ENCODE measurements at regions of chr1 and their contacts with region 1.

Region 1: DNA sequence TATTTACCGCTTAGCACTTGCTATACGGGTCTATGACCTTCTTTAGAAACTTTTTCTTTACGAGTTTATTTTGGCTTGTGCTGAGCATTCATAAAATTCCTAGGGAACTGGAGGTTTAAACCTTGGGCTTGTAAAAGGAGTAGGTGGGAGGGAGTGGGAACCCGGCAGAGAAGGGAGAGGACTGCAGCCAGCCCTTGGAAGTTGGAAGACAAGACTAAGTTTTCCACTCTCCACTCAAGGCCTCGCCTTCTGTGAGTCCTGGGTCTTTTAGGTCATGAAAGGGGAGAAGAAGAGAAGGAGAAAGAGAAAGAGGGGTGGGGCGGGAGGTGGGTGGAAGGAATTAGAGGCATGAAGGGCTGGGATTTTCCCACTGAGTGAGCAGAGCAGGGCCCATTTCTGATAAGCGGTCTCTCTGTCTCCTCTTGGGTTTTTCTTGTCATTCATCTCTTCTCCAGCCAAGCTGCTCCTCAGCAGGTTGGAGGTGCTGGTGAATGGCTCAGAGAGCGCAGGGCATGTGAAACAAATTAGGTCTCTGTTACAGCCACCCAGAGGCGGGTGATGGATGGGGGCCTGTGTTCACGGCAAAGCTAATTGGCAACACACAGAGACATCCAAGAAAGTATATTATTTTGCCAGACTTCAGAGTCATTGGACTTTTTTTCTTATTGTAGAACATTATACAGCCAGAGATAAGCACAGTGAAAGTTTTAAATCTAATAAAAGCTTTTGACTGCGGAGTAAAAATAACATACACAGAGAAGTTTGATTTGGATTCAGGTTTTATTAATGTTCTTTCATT is 247.3 kb downstream of the FOXD2 start:
- DNase-seq: peak; percentile 74
- H3K4me3 ChIP-seq: no peak overlapping the region
- H3K27ac ChIP-seq: peak overlapping the region in 1 of 2 experiments; percentile 32; a peak in 1 of 4 replicates
- H3K4me1 ChIP-seq: peaks cover 0 to 19% of the 10 kb centered on the region in 2 experiments; a peak in 2 of 4 replicates
- H3K27me3 ChIP-seq: peaks cover 5% of the 10 kb centered on the region; the same call in 1 of the 2 replicates
- CTCF ChIP-seq: no peak
- EP300 ChIP-seq: peak in 1 of 2 experiments; percentile 39; a peak in 1 of 4 replicates
- RAD21 ChIP-seq: no peak

Region 2: GRCh38 chr1:47521034-47521881 is 163.9 kb before region 1 on chr1:
- CTCF ChIA-PET with region 1: no interaction called
- POLR2A ChIA-PET with region 1: no interaction called
- DNase-seq: no peak
- H3K4me3 ChIP-seq: no peak overlapping the region
- H3K27ac ChIP-seq: no peak overlapping the region
- H3K4me1 ChIP-seq: no peaks in the 10 kb centered on the region
- H3K27me3 ChIP-seq: no peaks in the 10 kb centered on the region
- CTCF ChIP-seq: no peak
- EP300 ChIP-seq: no peak
- RAD21 ChIP-seq: no peak

Region 3: DNA sequence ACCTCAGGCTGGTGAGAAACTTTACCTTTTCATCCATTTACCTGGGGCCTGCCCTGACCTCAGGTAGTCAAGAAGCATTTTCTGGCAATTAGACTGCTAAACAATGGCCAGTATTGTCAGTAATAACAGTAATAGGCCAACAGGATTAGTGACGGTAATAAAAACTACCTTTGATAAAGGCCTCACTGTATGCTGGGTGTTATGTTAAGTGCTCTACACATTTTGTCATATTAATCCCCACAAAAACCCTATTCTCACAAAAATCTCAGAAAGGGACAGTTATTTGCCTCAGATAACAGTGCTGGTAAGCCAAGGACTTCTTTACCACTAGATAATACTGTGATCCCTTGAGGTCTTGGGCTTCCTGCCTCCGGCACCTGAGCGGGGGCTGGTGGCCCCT is 56.0 kb before region 1 on chr1:
- CTCF ChIA-PET with region 1: no interaction called
- POLR2A ChIA-PET with region 1: no interaction called
- DNase-seq: no peak
- H3K4me3 ChIP-seq: no peak overlapping the region
- H3K27ac ChIP-seq: no peak overlapping the region
- H3K4me1 ChIP-seq: peaks cover 0 to 29% of the 10 kb centered on the region in 2 experiments; a peak in 1 of 4 replicates
- H3K27me3 ChIP-seq: no peaks in the 10 kb centered on the region
- CTCF ChIP-seq: no peak
- EP300 ChIP-seq: no peak
- RAD21 ChIP-seq: no peak

Region 4: GRCh38 chr1:47703981-47704596 is 18.9 kb after region 1 on chr1:
- CTCF ChIA-PET with region 1: interaction called, 23 read pairs
- POLR2A ChIA-PET with region 1: no interaction called
- DNase-seq: no peak
- H3K4me3 ChIP-seq: no peak overlapping the region
- H3K27ac ChIP-seq: no peak overlapping the region
- H3K4me1 ChIP-seq: peaks cover 0 to 11% of the 10 kb centered on the region in 2 experiments; a peak in 1 of 4 replicates
- H3K27me3 ChIP-seq: peaks cover 26% of the 10 kb centered on the region
- CTCF ChIP-seq: peak; percentile 43
- EP300 ChIP-seq: no peak
- RAD21 ChIP-seq: peak; percentile 63

Region 5: GRCh38 chr1:47732489-47732888 is 47.3 kb after region 1 on chr1:
- CTCF ChIA-PET with region 1: no interaction called
- POLR2A ChIA-PET with region 1: no interaction called
- DNase-seq: no peak
- H3K4me3 ChIP-seq: no peak overlapping the region
- H3K27ac ChIP-seq: no peak overlapping the region
- H3K4me1 ChIP-seq: no peaks in the 10 kb centered on the region
- H3K27me3 ChIP-seq: no peaks in the 10 kb centered on the region; the same call in 1 of the 2 replicates
- CTCF ChIP-seq: no peak
- EP300 ChIP-seq: no peak
- RAD21 ChIP-seq: no peak